Right cardiac atrium (tissue), 5 donors: ENCODE measurements at regions of chr7 and their contacts with region 1.

Region 1: DNA sequence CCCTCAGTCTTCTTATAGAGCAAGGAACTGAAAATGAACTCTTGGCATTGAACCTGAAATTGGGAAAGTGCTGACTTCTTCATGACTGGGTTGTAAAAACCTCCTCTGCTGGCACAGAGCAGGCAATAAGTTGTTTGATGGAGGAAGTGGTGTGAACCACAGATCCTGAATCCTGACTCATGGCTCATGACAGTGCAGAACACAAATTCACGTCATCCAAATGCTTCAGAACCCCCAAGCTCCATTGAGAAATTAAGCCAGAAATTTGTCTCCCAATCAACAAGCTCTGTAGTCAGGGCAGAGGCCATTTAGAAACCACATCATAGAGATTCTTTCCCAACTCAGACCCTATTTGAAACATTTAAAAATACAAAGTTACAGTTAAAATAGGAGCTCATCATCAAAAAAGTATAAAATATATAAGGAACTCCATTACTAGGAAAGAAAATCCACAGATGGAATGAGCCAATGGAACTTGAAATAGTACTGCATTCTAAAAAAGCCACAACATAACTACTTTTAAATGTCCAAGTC is 10.3 kb upstream of the STK17A start:
- DNase-seq: no peak
- ATAC-seq: peak; percentile 82 to 84
- H3K4me3 ChIP-seq: no peak overlapping the region
- H3K27ac ChIP-seq: no peak overlapping the region
- H3K4me1 ChIP-seq: no peaks in the 10 kb centered on the region
- H3K27me3 ChIP-seq: no peaks in the 10 kb centered on the region

Region 2: GRCh38 chr7:43700059-43700501 is 127.5 kb after region 1 on chr7:
- intact Hi-C with region 1: loop called in 1 of 4 experiments (anchors 5 kb)
- DNase-seq: no peak
- ATAC-seq: peak in 1 of 2 donors; percentile 69
- H3K4me3 ChIP-seq: no peak overlapping the region
- H3K27ac ChIP-seq: no peak overlapping the region
- H3K4me1 ChIP-seq: no peaks in the 10 kb centered on the region
- H3K27me3 ChIP-seq: no peaks in the 10 kb centered on the region

Region 3: GRCh38 chr7:43847496-43847895 is 274.9 kb after region 1 on chr7:
- intact Hi-C with region 1: loop called in 1 of 4 experiments (anchors 10 kb)
- DNase-seq: no peak
- ATAC-seq: no peak
- H3K4me3 ChIP-seq: no peak overlapping the region
- H3K27ac ChIP-seq: no peak overlapping the region
- H3K4me1 ChIP-seq: no peaks in the 10 kb centered on the region
- H3K27me3 ChIP-seq: no peaks in the 10 kb centered on the region